ENCODE measurements at regions of chr1 and their contacts with region 1.

Region 1: DNA sequence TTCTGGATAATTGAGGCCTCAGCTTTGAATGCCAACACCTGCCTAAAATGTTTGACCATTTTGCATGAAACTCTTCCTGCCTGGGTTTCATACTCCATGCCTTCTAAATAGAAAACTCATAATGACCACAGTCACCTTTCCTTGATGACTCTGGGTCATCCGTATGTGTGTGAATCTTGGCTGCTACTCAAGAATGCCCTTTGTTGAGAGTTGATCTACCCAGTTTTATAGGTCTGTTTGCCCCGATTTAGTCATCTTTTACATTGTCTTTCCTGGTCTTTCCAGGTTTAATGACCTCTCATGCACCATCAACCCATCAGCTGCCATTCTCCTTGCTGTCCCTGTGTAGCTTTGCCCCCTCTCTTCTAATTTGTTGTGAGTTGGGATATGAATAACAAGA is 2.7 kb upstream of the SLC5A9 start:
- DNase-seq: no peak

Region 2: DNA sequence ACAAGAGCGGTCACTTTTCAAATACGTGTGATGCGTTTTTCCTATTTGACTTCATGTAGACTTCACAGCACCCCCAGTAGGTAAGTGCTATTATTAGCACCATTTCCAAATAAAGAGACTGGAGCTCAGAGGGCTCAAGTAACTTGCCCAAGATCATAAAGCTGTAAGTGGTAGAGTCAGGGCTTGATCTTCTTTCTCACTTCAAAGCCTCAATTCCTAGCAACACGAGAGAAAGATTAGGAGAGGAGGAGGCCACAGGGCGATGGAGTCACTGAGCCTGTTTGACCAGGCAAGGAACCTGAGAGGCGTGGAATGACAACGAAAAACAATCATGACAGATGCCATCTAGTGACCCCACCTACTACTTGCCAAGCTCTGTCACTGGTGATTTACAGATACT is 601.0 kb before region 1 on chr1:
- intact Hi-C with region 1: no loop called
- DNase-seq: no peak

Region 3: DNA sequence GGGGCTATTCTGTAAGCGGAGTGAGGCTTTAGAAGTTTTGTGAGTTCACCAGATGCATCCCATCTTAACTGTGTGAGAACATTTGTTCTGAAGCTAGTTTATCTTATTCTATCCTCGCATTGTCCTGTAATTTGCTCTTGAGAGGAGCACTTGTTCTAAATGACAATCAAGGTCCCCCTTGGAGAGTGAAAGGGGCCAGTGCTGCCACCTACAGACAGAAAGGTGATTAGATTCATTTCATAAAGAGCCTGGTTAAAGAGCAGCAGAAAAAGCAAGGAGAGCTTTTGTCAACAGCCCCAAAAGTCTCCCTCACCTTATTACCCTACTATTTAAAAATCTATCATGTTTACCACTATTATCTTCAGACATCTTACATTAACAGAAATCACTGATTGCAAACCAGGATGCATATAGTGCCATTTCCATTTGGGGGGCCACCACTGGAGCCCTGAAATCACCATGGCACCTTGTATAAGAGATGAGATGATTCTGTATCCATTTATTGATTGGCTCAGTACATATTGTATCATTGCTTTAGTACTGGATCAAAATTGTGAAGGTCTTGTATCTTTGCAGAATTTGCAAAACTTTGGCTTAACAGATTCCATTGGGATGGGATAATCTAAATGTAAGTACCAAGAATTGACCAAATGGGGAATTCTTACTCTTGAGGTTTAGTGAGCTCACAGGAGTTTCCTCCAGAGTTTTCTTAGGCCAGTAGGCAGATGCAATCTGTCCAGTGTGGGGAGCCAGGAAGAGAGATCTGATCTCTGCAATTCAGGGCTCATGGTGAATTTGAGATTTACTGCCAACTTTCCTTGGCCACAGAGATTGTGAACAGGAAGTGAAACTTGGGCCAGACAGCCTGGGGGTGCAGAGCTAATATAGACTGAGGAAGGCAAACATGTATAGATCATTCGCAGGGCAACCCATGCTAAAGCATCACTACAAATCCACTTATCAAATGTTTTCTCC is 158.4 kb before region 1 on chr1:
- intact Hi-C with region 1: no loop called
- DNase-seq: peak; percentile 3

Region 4: GRCh38 chr1:48236716-48237470 is 17.1 kb after region 1 on chr1:
- intact Hi-C with region 1: loop called in 1 of 2 experiments (anchors 1 kb)
- DNase-seq: no peak